ENCODE measurements at regions of chr2 and their contacts with region 1.

Region 1: GRCh38 chr2:24977631-24978030 is 5.9 kb upstream of the DNAJC27 start:
- DNase-seq: no peak

Region 2: DNA sequence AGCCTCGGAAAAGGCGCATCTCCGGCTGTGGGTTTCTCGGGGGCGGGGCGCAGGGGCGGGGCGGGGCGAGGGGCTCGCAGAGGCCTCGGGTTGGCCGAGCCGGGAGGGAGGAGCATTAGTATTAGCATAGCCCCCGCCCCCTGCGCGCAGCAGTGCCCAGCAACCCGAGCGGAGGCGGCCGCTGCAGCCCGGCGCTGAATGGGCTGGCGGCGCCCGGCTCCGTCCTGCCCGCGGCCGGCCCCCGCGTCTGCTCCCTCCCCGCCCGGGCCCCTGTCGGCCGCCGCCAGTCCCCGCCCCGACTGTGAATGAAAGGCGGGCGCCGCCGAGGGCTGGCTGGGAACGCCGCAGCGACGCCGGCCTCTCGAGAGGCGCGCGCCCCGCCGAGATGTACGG is 64.3 kb after region 1 on chr2 and contains the start of gene EFR3B:
- intact Hi-C with region 1: loop called in 1 of 2 experiments (anchors 5 kb)
- DNase-seq: peak; percentile 98
- total RNA-seq, gene EFR3B: 1.7 TPM

Region 3: DNA sequence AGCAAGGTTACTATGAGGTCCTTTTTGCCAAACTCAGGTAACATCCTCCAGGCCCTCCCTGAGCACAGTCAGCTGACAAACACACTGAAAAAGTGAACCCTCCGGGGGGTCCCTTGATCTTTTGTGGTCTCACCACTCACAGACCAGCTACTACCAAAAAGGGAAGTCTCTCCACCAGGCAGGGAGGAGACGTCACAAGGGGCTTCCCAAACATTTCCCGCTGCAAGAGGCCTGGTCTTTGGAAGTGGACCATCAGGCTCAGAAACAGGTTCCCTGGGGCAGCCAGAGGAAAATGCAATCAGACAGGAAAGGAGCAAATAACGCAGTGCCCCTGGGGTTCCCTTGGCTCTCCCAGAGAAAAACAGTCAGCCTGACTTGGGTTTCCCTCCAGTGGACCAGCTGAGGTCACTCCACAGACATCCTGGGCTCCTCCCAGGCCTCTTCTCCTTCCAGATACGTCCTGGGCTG is 229.5 kb after region 1 on chr2:
- intact Hi-C with region 1: loop called in 1 of 2 experiments (anchors 1 kb)
- DNase-seq: no peak

Region 4: GRCh38 chr2:25586726-25587144 is 609.1 kb after region 1 on chr2:
- intact Hi-C with region 1: no loop called
- DNase-seq: no peak

Measured in posterior vena cava (tissue), 2 donors.